Heart right ventricle (tissue), 16 donors: ENCODE measurements at regions of chr1 and their contacts with region 1.

Region 1: GRCh38 chr1:171576144-171576543 is 45.9 kb upstream of the MYOCOS start:
- DNase-seq: no peak
- ATAC-seq: no peak
- H3K4me3 ChIP-seq: no peak overlapping the region
- H3K27ac ChIP-seq: no peak overlapping the region
- H3K4me1 ChIP-seq: no peaks in the 10 kb centered on the region
- H3K27me3 ChIP-seq: no peaks in the 10 kb centered on the region
- CTCF ChIP-seq: no peak

Region 2: GRCh38 chr1:171521567-171521966 is 54.6 kb before region 1 on chr1:
- intact Hi-C with region 1: loop called in 1 of 10 experiments (anchors 10 kb)
- DNase-seq: no peak
- ATAC-seq: no peak
- H3K4me3 ChIP-seq: no peak overlapping the region
- H3K27ac ChIP-seq: no peak overlapping the region
- H3K4me1 ChIP-seq: peaks cover 0 to 7% (median 0%) of the 10 kb centered on the region in 9 donors
- H3K27me3 ChIP-seq: no peaks in the 10 kb centered on the region
- CTCF ChIP-seq: no peak

Region 3: DNA sequence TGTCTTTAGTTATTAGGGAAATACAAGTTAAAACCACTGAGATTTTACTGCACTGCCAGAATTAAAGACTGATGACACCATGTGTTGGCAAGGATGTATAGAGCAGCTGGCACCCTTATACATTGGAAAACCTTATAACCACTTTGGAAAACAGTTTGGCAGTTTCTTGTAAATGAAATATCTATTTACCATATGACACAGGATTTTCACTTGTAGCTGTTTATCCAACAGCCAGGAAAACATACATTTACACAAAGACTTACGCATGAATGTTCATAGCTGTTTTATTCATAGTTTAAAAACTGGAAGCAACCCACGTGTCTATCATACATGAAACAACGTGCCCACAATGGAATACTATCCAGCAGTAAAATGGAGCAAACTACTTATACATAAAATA is 45.5 kb before region 1 on chr1:
- intact Hi-C with region 1: loop called in 3 of 10 experiments (anchors 5 to 10 kb)
- DNase-seq: no peak
- ATAC-seq: no peak
- H3K4me3 ChIP-seq: no peak overlapping the region
- H3K27ac ChIP-seq: no peak overlapping the region
- H3K4me1 ChIP-seq: no peaks in the 10 kb centered on the region
- H3K27me3 ChIP-seq: no peaks in the 10 kb centered on the region
- CTCF ChIP-seq: no peak

Region 4: DNA sequence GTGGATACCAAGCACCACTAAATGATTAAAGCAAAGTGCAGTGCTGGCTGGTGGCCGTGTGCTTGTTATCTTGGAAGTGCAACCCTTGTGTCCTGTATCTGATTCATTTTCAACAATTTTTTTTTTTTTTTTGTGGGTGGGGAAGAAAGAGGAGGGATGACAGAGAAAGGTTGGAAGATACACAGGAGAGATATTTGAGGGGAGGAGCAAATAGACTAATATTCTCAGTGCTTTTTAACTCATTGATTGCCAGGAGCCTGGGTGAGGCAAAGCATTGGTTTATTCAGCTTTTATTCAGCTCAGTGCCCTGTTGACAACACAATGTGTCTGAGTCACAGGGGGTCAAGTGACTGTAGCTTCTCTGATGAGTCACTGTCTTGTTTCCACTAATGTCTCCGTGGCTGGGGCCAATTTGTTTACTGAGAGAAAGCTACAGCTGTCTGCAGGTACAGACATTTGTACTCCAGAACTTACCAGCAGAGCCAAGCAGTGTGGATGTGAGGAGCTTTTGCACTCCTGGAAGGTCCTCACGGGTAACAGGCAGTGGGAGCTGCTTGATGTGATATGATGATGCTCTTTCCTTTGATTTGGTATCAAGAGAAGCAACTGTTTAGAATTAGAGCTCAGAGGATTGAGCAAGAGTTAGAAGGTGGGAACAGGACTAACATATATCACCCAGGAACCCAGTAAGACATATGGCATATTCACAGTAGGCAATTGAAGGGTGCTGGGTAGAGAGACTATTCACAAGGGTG is 241.5 kb after region 1 on chr1:
- intact Hi-C with region 1: no loop called
- DNase-seq: no peak
- ATAC-seq: peak in 1 of 8 donors; percentile 37
- H3K4me3 ChIP-seq: no peak overlapping the region
- H3K27ac ChIP-seq: no peak overlapping the region
- H3K4me1 ChIP-seq: peaks cover 0 to 10% (median 0%) of the 10 kb centered on the region in 9 donors
- H3K27me3 ChIP-seq: no peaks in the 10 kb centered on the region
- CTCF ChIP-seq: no peak